MCF 10A (cell line): ENCODE measurements at regions of chr15 and their contacts with region 1.

Region 1: DNA sequence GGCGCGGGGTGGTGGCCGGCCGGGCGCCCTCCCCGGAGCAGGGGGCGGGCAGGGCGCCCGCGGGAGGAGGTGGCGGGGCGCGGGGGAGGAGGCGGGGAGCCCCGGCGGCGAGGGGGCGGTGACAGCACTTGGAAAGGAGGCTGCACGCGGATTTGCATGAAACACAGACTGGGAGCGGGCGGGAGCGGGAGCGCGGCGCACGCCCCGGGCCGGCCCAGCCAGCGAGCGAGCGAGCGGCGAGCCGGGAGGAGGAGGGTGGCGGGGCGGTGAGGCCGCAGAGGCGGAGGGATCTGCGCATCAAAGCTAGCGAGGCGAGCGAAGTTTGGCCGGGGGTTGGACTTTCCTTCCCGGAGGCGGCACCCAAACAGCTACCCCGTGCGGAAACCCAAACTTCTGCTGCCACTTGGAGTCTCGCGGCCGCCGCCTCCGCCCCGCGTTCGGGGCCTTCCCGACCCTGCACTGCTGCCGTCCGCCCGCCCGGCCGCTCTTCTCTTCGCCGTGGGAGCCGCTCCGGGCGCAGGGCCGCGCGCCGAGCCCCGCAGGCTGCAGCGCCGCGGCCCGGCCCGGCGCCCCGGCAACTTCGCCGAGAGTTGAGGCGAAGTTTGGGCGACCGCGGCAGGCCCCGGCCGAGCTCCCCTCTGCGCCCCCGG is at the start of gene SMAD3:
- DNase-seq: peak; percentile 91
- H3K4me3 Mint-ChIP-seq: peak within 1 kb of the TSS; percentile 92
- H3K27ac Mint-ChIP-seq: peak within 1 kb of the TSS; percentile 81
- H3K4me1 Mint-ChIP-seq: peaks cover 29% of the 10 kb centered on the region
- H3K27me3 Mint-ChIP-seq: no peaks in the 10 kb centered on the region
- CTCF ChIP-seq: no peak
- total RNA-seq, gene SMAD3: 19.9 and 26.1 TPM in 2 replicates

Region 2: DNA sequence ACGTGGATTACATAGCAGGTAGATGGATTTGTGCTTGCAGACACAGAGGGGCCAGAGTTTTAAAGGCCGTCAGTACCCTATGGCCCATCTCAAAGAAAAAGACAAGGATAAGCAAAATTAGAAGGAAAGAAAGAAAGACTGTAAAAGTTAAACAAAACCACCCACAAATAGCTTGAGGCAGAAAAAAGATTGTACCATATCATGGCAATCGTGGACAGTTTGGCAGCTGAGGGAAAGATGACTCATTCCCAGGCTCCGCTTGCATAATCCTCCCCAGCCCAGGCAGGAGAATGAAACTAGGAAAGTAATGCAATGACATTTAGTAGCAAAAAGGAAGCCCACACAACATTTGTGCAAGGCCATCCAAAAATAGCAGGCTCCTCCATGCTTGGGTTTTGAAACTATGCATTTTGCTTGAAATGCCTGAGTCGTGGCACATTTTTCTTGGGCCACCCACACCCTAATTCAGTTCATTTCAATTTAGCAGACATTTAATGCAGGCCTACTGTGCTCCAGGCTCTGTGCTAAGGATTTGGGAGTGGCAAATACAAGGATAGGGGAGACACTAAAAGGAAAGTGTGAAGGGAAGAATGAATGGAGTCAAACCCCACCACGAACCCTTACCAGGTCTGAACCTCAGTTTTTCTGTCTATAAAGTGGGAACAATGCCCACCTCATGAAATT is 41.1 kb before region 1 on chr15:
- CTCF ChIA-PET with region 1: no interaction called
- POLR2A ChIA-PET with region 1: interaction called, 13 read pairs
- intact Hi-C with region 1: no loop called
- DNase-seq: peak; percentile 97
- H3K4me3 Mint-ChIP-seq: no peak overlapping the region
- H3K27ac Mint-ChIP-seq: peak overlapping the region; percentile 72
- H3K4me1 Mint-ChIP-seq: peaks cover 39% of the 10 kb centered on the region
- H3K27me3 Mint-ChIP-seq: no peaks in the 10 kb centered on the region
- CTCF ChIP-seq: no peak

Region 3: DNA sequence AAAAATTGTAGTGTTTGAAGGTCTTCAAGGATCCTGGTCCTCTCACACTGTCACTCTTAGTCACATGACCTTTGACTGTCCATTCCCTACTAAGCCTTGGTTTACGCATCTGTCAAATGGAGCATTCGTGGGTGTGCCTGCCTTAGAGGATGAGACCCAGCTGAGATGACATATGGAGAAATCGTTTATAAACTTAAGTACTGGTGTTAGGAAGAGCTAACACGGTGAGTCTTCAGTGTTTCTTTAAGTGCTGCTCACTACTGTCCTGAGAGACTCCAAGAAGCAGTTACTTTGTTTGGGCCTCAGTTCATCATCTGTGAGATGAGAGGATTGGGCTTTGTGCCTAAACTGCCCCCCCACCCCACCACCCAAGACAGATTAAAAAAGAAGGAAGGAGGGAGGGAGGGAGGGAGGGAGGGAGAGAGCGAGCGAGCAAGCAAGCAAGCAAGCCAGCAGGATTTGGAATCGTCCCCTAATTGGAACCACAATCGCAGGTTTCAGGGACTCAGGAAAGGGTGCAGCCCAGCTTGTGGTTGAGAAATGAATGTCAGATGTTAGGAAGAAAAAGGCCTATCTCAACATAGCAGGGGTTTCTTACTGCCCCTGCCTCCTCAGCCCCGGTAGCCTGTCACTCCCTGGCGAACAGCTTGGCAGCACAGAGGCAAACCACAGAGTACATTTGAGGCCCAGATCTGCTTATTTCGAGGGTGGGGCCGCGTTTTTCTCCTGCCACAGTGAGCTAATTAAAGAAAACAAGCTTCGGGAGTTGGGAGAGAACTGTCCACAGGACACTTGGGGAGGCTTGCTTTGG is 32.6 kb after region 1 on chr15:
- CTCF ChIA-PET with region 1: interaction called, 4 read pairs
- POLR2A ChIA-PET with region 1: interaction called, 13 read pairs
- intact Hi-C with region 1: no loop called
- DNase-seq: peak; percentile 78
- H3K4me3 Mint-ChIP-seq: peak overlapping the region; percentile 82
- H3K27ac Mint-ChIP-seq: peak overlapping the region; percentile 99
- H3K4me1 Mint-ChIP-seq: peaks cover 37% of the 10 kb centered on the region
- H3K27me3 Mint-ChIP-seq: no peaks in the 10 kb centered on the region
- CTCF ChIP-seq: no peak

Region 4: DNA sequence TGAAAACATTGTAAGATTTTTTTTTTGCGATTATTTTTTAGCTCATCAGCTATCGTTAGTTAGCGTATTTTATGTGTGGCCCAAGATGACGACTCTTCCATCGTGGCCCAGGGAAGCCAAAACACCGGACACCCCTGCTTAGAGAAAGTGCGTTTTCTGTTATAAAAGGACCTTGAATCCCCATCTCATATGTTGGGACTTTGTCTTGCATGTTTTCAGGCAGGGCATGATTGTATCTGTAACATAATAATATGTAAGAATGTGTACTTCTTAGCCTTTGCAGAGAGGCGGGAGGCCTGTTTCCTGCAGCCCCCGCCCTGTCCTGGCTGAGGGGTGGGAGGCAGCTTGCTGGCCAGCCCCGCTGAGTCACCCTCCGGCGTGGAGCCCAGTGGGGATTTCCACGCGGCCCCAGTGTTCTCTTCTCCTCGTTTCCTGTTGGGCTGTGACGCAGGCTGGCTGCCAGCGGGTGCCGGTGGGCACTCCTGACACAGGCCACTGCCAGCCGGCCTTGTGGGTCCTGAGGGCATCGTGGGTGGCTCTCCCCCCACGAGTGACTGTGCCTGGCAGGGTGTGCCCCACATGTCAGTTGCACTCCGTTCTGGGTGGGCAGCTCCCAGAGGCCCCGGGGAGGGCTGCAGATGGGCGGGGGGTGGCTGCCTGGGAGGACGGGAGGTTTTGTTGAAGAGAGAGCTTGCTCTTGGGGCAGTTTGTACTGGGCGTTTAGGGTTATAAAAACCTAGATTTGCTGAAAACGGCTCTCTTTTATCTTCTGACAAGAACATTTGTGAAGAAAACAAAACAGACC is 55.5 kb after region 1 on chr15:
- CTCF ChIA-PET with region 1: interaction called, 3 read pairs
- POLR2A ChIA-PET with region 1: interaction called, 26 read pairs
- intact Hi-C with region 1: loop called (anchors 5 kb)
- DNase-seq: peak; percentile 77
- H3K4me3 Mint-ChIP-seq: peak overlapping the region; percentile 55
- H3K27ac Mint-ChIP-seq: peak overlapping the region; percentile 97
- H3K4me1 Mint-ChIP-seq: peaks cover 66% of the 10 kb centered on the region
- H3K27me3 Mint-ChIP-seq: no peaks in the 10 kb centered on the region
- CTCF ChIP-seq: no peak

Region 5: DNA sequence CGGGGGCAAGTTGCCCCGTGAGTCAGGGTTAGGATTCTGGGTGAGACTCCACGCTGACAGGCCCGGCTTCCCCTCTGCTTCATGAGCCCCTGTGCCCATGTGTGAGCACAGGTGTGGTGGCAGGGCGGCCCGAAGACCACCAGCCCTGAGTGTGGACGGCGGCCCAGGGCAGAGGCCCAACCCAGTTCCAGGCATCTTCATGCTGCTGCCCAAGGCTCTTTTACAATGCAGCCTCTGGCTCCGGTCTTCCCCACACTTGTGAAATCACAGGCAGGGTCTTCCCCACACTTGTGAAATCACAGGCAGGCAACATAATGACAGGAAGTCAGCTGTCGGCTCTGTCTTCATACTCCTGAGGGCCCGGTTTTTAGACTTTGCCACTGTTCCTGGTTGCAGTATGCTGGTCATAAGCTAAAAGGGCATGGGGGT is 110.1 kb after region 1 on chr15:
- CTCF ChIA-PET with region 1: interaction called, 3 read pairs
- POLR2A ChIA-PET with region 1: interaction called, 10 read pairs
- intact Hi-C with region 1: loop called (anchors 1 kb)
- DNase-seq: peak; percentile 93
- H3K4me3 Mint-ChIP-seq: peak overlapping the region; percentile 48
- H3K27ac Mint-ChIP-seq: peak overlapping the region; percentile 80
- H3K4me1 Mint-ChIP-seq: peaks cover 60% of the 10 kb centered on the region
- H3K27me3 Mint-ChIP-seq: no peaks in the 10 kb centered on the region
- CTCF ChIP-seq: no peak

Region 6: DNA sequence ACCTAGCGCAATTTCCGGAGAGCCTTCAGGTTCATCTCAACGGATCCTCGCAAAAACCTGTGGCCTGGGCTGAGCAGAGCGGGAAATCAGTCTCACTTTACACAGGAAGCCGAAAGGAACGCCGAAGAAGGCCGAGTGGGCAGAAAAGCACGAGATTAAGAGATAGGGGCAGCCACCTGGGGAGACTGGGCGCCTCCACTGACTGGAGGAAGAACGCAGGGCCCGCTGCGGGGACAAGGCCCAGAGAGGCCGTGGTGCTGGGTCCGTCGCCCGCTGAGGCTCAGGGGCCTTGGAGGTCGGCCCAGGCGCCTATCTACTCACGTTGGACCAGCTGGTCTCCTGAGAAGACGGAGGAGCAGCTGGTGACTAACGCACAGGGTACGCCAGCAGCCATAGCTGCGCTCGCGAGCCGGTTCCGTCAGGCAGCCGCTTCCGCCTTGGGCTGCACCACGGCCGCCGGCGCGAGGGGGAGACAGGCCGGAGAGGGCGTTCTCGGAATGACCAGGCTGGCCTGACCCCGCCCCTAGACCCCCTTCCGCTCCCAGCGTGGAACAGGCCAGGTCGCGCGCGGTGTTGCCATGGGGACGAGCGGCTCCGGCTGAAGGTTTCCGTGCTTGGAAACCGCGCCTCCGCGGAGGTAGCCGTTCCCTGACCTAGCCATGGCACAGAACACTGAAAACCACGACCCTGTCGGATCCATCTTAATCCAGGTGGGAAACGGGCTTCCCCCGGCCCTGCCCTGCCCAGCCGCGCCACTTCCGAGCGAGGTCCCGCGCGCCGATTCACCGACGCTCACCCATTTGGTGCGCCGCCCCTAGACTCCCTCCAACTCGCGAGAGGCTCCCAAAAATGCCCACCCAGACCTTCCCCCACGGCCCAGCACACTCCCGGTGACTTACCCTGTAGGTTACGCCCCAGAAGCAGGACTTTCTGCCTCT is 188.9 kb after region 1 on chr15 and contains the starts of genes AAGAB and IQCH:
- CTCF ChIA-PET with region 1: no interaction called
- POLR2A ChIA-PET with region 1: interaction called, 13 read pairs
- intact Hi-C with region 1: loop called (anchors 5 kb)
- DNase-seq: peak; percentile 96
- H3K4me3 Mint-ChIP-seq: peak within 1 kb of the TSS; percentile 97
- H3K27ac Mint-ChIP-seq: peak within 1 kb of the TSS; percentile 99
- H3K4me1 Mint-ChIP-seq: peaks cover 19% of the 10 kb centered on the region
- H3K27me3 Mint-ChIP-seq: no peaks in the 10 kb centered on the region
- CTCF ChIP-seq: no peak
- total RNA-seq, gene AAGAB: 52.7 and 60.7 TPM in 2 replicates
- total RNA-seq, gene IQCH: 4.4 and 5.0 TPM in 2 replicates